Left lung (tissue), 14 donors: ENCODE measurements at regions of chr3 and their contacts with region 1.

Region 1: DNA sequence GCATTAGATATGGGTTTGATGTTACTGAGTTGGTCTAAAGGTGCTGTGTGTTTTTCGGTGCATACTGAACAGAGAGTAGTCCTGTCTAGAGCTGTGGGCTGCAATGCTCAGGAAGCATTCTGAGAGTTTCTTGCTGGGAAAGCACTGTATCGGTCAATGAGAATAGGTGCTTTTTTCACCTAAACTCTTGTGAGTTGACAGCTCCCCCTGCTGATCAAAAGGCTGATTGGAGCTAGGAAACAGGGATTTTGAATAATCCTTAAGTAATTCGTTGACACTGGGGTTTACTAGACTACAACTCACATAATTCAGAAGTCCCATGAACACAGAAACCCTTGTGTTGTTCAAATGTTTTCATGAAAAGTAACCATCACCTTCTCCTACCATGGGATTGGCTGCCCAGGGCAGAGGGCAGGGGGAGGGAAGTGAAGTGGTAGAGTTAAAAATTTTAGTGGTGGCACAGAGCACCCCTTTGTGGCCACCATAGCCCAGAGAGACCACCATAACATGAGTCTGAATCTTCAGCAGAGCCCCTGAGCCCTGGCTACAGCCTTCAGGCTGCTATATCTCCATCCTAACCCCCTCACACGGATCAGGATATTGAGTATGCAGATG is 13.0 kb upstream of the MANF start:
- DNase-seq: peak in 2 of 4 donors; percentile 38 to 65
- ATAC-seq: peak; percentile 89
- H3K4me3 ChIP-seq: no peak overlapping the region
- H3K27ac ChIP-seq: no peak overlapping the region
- H3K4me1 ChIP-seq: no peaks in the 10 kb centered on the region
- H3K27me3 ChIP-seq: no peaks in the 10 kb centered on the region
- CTCF ChIP-seq: peak; percentile 56 to 66

Region 2: GRCh38 chr3:51099794-51100535 is 272.1 kb before region 1 on chr3:
- intact Hi-C with region 1: loop called in 1 of 2 experiments (anchors 10 kb)
- DNase-seq: peak in 1 of 4 donors; percentile 45
- ATAC-seq: peak; percentile 97
- H3K4me3 ChIP-seq: no peak overlapping the region
- H3K27ac ChIP-seq: no peak overlapping the region
- H3K4me1 ChIP-seq: no peaks in the 10 kb centered on the region
- H3K27me3 ChIP-seq: no peaks in the 10 kb centered on the region
- CTCF ChIP-seq: peak; percentile 68 to 70

Region 3: DNA sequence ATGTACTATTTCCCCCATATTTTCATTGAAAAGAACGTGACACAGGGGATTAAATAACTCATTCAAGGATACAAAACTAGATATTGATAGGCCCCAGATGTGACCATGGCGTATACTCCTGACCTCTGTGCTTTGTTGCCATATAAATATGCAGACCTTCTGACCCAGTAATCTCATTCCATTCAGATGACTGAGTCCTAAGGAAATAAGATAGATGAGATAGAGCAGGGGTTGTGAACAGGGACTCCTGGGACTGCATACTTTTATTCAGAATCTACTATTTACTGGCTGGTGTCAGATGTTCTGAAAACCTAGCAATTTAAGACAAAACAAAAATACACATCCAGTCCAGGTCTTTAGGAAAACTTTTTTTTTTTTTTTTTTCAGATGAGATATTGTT is 126.2 kb before region 1 on chr3:
- intact Hi-C with region 1: no loop called
- DNase-seq: no peak
- ATAC-seq: no peak
- H3K4me3 ChIP-seq: no peak overlapping the region
- H3K27ac ChIP-seq: no peak overlapping the region
- H3K4me1 ChIP-seq: peaks cover 0 to 7% of the 10 kb centered on the region in 2 donors
- H3K27me3 ChIP-seq: no peaks in the 10 kb centered on the region
- CTCF ChIP-seq: no peak